K562 (cell line): ENCODE measurements at regions of chr9 and their contacts with region 1.

Region 1: DNA sequence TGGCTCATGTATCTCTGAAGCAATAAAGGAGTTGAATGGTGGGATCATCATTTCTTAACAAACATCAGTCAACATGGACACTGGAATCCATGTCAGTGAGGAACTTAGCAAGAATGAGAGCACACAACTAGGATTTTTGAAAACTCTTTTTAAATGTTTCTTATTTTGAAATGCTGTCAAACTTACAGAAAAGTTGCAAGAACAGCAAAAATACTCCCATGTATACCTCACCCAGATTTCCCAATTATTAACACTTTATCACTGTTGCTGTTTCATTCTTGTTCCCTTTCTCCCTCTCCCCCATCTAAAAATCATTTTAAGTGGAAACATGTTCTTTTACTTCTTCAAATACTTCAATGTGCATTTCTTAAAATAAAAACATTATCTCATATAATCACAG is 65.5 kb downstream of the RORB start:
- DNase-seq: no peak
- ATAC-seq: no peak
- H3K4me3 ChIP-seq: no peak overlapping the region
- H3K27ac ChIP-seq: no peak overlapping the region
- H3K4me1 ChIP-seq: no peaks in the 10 kb centered on the region
- H3K27me3 ChIP-seq: no peaks in the 10 kb centered on the region
- CTCF ChIP-seq: no peak
- EP300 ChIP-seq: no peak
- POLR2A ChIP-seq: no peak
- RAD21 ChIP-seq: no peak

Region 2: GRCh38 chr9:73548201-73548600 is 1014.4 kb before region 1 on chr9:
- CTCF ChIA-PET with region 1: no interaction called
- POLR2A ChIA-PET with region 1: no interaction called
- in situ Hi-C with region 1: no loop called
- intact Hi-C with region 1: no loop called
- DNase-seq: no peak
- ATAC-seq: no peak
- H3K4me3 ChIP-seq: no peak overlapping the region
- H3K27ac ChIP-seq: no peak overlapping the region
- H3K4me1 ChIP-seq: no peaks in the 10 kb centered on the region
- H3K27me3 ChIP-seq: no peaks in the 10 kb centered on the region
- CTCF ChIP-seq: no peak
- EP300 ChIP-seq: no peak
- POLR2A ChIP-seq: no peak
- RAD21 ChIP-seq: no peak

Region 3: DNA sequence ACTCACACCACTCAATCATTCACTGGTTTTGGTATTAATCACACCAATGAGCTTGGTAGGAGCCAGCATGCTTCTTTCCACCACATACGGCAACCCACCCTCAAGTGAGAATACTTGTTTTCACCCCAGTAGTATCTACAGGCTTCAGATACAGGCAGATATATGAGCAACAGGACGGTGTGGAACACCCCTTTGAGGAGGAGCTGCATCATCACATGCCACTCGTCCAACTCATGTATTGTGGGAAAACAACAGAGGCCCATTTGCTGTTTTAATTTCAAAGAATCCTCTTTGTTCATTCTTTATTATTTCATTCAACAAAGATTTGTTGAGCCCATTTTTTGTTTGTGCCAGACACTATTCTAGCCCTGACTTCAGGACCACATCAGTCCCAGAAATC is 19.5 kb before region 1 on chr9:
- CTCF ChIA-PET with region 1: no interaction called
- POLR2A ChIA-PET with region 1: no interaction called
- in situ Hi-C with region 1: no loop called
- intact Hi-C with region 1: loop called (anchors 2 kb)
- DNase-seq: no peak
- ATAC-seq: no peak
- H3K4me3 ChIP-seq: no peak overlapping the region
- H3K27ac ChIP-seq: no peak overlapping the region
- H3K4me1 ChIP-seq: no peaks in the 10 kb centered on the region
- H3K27me3 ChIP-seq: no peaks in the 10 kb centered on the region
- CTCF ChIP-seq: no peak
- EP300 ChIP-seq: no peak
- POLR2A ChIP-seq: no peak
- RAD21 ChIP-seq: no peak

Region 4: GRCh38 chr9:74577956-74578355 is 15.3 kb after region 1 on chr9:
- CTCF ChIA-PET with region 1: no interaction called
- POLR2A ChIA-PET with region 1: no interaction called
- in situ Hi-C with region 1: no loop called
- intact Hi-C with region 1: no loop called
- DNase-seq: peak in 1 of 4 experiments; percentile 4
- ATAC-seq: peak; percentile 26; the same call in 1 of the 3 replicates
- H3K4me3 ChIP-seq: no peak overlapping the region
- H3K27ac ChIP-seq: no peak overlapping the region
- H3K4me1 ChIP-seq: no peaks in the 10 kb centered on the region
- H3K27me3 ChIP-seq: no peaks in the 10 kb centered on the region
- CTCF ChIP-seq: peak in 2 of 3 experiments; percentile 24 to 38; a peak in 2 of 6 replicates
- EP300 ChIP-seq: no peak
- POLR2A ChIP-seq: no peak
- RAD21 ChIP-seq: peak; percentile 19 to 27; a peak in 2 of 4 replicates